ENCODE measurements at regions of chr3 and their contacts with region 1.

Region 1: GRCh38 chr3:186617038-186617946 is 4.4 kb downstream of the AHSG start:
- DNase-seq: peak; percentile 99
- H3K4me3 ChIP-seq: peak overlapping the region; percentile 63
- H3K27ac ChIP-seq: no peak overlapping the region
- H3K4me1 ChIP-seq: peaks cover 14% of the 10 kb centered on the region; the same call in 1 of the 2 replicates
- H3K27me3 ChIP-seq: peaks cover 21% of the 10 kb centered on the region

Region 2: GRCh38 chr3:186680869-186681268 is 63.6 kb after region 1 on chr3:
- in situ Hi-C with region 1: no loop called
- DNase-seq: no peak
- H3K4me3 ChIP-seq: no peak overlapping the region
- H3K27ac ChIP-seq: no peak overlapping the region
- H3K4me1 ChIP-seq: no peaks in the 10 kb centered on the region
- H3K27me3 ChIP-seq: no peaks in the 10 kb centered on the region

Region 3: DNA sequence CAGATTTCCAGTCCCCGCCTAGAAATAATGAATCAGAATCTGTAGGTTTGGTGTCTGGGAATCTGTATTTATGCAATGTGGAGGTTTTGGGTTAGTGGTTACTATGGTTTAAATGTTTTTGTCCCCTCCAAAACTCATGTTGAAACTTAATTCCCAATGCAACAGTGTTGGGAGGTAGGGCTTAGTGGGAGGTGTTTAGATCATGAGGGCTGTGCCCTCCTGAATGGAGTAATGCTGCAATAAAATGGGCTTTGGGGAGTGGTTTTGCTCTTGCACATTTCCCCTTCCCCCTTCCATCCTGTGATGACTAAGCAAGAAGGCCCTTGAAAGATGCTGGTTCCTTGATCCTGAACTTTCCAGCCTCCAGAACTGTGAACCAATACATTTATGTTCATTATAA is 198.1 kb after region 1 on chr3:
- in situ Hi-C with region 1: loop called (anchors 10 kb)
- DNase-seq: peak; percentile 60
- H3K4me3 ChIP-seq: no peak overlapping the region
- H3K27ac ChIP-seq: no peak overlapping the region
- H3K4me1 ChIP-seq: peaks cover 6% of the 10 kb centered on the region
- H3K27me3 ChIP-seq: no peaks in the 10 kb centered on the region

Region 4: GRCh38 chr3:187714404-187714979 is 1097.2 kb after region 1 on chr3:
- in situ Hi-C with region 1: loop called (anchors 25 kb)
- DNase-seq: peak; percentile 78
- H3K4me3 ChIP-seq: no peak overlapping the region
- H3K27ac ChIP-seq: no peak overlapping the region
- H3K4me1 ChIP-seq: no peaks in the 10 kb centered on the region
- H3K27me3 ChIP-seq: no peaks in the 10 kb centered on the region

Measured in GM23248 (cell line).